ENCODE measurements at regions of chr9 and their contacts with region 1.

Region 1: DNA sequence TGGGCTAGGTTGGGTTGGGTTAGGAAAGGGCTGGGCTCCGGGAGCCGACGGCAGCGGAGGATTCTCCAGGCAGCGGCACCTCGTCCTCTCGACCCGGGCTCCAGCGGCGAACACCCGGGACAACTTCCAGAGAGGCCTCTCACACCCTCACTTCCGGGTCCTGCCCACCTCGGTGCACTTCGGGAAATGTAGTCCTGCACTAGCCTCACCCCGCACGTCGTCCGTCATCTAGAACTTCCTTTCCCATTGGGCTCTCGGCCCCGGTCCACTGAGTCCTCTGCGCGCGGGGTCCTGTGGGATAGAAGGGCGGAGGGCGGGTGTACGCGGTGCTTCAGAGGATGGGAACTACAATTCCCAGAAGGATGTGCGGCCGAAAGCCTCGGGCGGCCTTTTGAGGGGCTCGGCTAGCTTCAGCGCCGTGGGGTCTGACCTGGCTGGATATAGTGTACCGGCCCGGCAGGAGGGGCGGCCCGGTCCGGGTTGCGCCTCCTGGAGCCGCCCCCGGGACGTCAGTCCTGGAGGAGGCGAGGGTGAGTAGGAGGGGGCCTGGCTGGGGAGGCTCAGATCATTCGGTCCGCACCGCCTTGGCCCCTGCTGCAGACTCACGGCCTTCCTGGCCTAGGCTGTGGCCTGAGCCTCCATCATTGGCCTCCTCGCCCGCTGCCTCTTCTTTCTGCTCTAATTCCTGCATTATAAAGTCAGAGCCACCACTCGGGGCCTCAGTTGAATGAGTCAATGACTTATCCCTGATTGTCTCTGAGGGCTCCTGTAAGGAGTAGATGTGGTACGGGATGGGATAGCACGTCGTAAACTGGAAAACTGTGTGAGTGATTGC is at the starts of genes ERP44 and INVS:
- DNase-seq: peak; percentile 99
- ATAC-seq: peak; percentile 99
- H3K4me3 ChIP-seq: peak within 1 kb of the TSS; percentile 88
- H3K27ac ChIP-seq: peak within 1 kb of the TSS; percentile 77
- H3K4me1 ChIP-seq: peaks cover 2% of the 10 kb centered on the region; the same call in 1 of the 2 replicates
- H3K27me3 ChIP-seq: no peaks in the 10 kb centered on the region
- CTCF ChIP-seq: no peak
- POLR2A ChIP-seq: peak; percentile 89
- RAD21 ChIP-seq: no peak
- total RNA-seq, gene ERP44: 9.1 and 16.1 TPM in 2 replicates
- total RNA-seq, gene INVS: 25.3 and 33.5 TPM in 2 replicates

Region 2: GRCh38 chr9:100111235-100111634 is 12.1 kb after region 1 on chr9:
- CTCF ChIA-PET with region 1: no interaction called
- POLR2A ChIA-PET with region 1: no interaction called
- dilution Hi-C with region 1: no loop called
- in situ Hi-C with region 1: no loop called
- intact Hi-C with region 1: loop called (anchors 1 kb)
- DNase-seq: peak; percentile 98
- ATAC-seq: peak; percentile 96
- H3K4me3 ChIP-seq: no peak overlapping the region
- H3K27ac ChIP-seq: no peak overlapping the region
- H3K4me1 ChIP-seq: no peaks in the 10 kb centered on the region
- H3K27me3 ChIP-seq: no peaks in the 10 kb centered on the region
- CTCF ChIP-seq: no peak
- POLR2A ChIP-seq: no peak
- RAD21 ChIP-seq: no peak

Measured in IMR-90 (cell line).